HEK293T (cell line): ENCODE measurements at regions of chr1 and their contacts with region 1.

Region 1: DNA sequence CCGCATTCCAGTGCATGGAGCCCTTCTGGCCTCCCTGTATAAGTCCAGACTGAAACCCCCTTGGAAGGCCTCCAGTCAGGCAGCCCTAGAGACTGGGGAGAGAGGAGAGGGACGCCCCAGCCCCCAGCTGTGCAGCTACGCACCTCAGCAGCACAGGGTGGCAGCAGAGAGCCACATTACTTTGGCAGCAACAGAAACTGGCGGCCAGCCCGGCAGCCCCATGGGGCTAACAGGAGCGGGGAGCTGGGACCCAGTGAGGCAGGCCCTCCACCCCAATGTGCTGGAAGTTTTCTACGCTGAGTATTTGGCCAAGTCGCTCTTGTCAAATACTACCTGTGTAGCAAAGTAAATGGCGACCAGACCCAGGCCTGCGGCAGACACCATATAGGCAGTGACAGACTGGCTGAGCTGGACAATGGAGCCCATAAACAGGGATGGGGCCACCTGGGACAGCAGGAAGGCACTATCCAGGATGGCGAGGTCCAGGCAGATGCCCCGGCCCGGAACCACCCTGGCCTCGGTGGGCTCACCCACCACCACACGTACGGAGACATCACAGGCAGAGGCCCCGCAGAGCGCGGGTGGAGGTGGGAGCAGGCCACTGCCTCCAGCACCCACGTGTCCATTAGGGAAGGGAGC is 21.2 kb downstream of the SLC45A3 start:
- DNase-seq: peak; percentile 92

Region 2: DNA sequence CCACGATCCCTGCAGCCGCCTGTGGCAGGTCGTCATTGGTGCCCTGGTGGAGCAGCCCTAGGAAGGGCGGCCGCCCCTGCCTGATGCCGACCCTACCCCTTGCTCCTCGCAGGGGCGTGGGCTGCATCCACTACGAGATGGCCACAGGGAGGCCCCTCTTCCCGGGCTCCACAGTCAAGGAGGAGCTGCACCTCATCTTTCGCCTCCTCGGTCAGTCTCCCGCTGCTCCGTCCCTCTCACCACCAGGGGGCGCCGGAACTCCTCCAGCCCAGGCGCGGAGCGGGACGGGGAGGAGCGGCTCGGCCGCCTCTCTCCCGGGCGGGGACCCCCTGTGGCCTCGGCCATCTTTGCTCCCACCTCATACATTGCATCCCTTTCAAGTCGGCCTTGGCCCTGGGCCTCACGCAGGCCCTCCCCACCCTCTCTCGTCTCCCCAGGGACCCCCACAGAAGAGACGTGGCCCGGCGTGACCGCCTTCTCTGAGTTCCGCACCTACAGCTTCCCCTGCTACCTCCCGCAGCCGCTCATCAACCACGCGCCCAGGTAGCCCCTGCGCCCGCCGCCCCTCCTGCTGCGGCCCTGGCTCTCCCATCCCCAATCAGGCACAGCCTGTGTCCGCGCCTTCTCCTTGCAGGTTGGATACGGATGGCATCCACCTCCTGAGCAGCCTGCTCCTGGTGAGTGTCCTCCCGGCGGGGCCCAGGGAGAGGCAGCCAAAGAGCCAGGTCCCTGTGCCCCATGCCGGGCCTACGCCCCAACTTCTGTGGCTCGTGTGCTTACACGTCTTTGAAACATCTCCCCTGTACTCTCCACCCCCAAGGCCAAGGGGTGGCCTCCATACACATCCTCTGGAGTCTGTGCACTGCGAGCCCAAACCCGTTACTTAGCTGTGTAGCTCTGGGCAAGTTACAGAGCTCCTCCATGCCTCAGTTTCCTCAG is 129.9 kb before region 1 on chr1:
- CTCF ChIA-PET with region 1: interaction called, 25 read pairs
- POLR2A ChIA-PET with region 1: no interaction called
- DNase-seq: peak; percentile 97

Region 3: DNA sequence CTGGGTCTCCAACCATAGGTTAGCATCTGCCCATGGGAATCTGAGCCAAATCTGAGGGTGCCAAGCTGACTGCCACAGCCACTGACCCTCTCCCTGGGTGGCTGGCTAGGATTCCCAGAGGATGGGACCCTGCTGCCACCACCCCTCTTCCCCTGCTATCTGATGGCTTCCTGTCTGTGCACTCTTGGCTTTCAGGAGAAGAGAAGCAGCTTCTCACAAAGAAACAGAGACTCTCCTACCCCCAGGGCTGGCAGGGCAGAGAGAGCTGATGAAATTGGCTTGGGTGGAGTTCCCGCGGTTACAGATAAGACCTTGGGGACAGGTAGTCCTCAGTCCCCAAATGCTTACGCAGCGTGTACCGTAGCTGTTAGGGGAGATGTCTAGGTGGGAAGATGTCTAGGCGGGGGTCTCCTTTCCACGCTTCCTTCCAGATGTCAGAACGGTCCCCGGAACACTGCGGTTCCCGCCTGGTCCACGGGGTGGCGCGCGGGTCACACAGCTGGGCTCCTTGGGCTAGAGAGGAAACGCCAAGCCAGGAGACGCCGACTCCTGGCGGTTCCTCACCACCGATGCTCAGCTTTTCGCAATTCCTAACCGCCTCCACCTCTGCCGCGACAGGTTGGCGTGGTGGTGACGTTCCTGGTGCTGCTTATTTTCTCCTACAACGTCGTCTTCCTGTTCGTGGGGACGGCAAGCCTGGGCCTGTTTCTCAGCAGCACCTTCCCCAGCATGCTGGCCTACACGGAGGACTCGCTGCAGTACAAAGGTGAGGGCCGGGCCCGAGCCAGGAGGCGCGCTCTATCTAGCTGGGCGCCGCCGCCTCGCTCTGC is 67.3 kb before region 1 on chr1:
- CTCF ChIA-PET with region 1: interaction called, 146 read pairs
- POLR2A ChIA-PET with region 1: no interaction called
- DNase-seq: peak; percentile 95

Region 4: GRCh38 chr1:205631727-205632373 is 27.2 kb before region 1 on chr1 and contains the start of gene ELK4:
- CTCF ChIA-PET with region 1: interaction called, 17 read pairs
- POLR2A ChIA-PET with region 1: interaction called, 5 read pairs
- DNase-seq: peak; percentile 99

Region 5: DNA sequence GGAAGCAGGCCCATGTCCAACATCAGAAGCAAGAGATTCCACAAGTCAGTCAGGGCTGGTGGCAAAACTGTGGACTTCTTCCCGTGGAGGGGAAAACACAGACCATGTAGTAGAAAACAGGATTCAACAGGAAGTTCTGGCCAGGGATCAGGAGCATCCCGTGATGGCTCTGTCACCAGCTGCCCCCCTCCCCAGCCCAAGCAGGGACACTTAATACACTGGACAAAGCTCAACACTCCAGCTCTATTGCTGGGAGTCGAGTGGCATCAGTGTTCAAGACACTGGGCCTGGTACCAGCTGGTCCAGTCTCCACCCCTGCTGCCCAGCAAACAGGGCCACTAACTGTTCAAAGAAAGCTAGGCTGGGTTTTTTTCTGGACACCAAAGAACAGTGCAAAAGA is 17.5 kb after region 1 on chr1:
- CTCF ChIA-PET with region 1: interaction called, 12 read pairs
- POLR2A ChIA-PET with region 1: no interaction called
- DNase-seq: no peak

Region 6: DNA sequence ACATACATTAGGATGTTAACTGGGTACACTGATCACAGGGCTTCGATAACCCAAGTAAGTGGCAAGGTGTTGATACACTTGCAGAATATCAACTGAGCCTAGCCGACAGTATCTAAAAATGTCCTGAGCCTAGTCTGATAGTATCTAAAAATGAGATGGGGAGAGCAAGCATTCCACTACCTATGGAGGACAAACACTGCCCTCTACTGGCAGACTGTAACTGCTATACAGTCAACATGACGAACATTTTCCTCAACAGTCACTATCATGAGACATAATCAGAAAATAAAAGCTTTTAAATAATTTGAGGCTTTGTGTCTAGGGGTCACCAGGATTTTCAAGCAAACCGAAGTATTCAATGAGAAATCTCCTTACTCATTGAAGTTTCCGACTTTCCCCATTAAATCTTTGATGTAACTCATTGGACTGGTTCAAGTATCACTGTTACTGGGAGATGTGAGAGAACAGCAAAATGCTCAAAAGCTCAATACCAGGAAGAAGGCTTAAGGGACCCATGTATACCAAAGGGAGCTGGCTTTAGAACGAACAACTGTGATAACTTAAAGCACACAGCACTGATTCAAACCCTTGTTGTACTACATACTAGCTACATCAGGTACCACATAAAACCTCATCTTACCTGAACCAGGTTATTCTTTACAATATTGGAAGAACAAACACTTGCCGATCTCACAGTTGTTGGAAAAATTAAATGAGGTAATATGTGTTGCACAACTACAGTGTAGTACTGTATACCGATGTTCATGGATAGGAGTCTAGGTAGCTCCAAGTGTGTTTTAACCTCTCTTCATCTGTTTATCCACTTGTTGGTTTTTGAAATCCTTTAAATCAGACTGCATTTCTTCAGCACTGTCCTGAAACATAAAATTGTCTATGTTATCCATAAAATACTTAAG is 52.3 kb after region 1 on chr1:
- CTCF ChIA-PET with region 1: interaction called, 82 read pairs
- POLR2A ChIA-PET with region 1: interaction called, 5 read pairs
- DNase-seq: peak; percentile 75